ENCODE measurements at regions of chr12 and their contacts with region 1.

Region 1: DNA sequence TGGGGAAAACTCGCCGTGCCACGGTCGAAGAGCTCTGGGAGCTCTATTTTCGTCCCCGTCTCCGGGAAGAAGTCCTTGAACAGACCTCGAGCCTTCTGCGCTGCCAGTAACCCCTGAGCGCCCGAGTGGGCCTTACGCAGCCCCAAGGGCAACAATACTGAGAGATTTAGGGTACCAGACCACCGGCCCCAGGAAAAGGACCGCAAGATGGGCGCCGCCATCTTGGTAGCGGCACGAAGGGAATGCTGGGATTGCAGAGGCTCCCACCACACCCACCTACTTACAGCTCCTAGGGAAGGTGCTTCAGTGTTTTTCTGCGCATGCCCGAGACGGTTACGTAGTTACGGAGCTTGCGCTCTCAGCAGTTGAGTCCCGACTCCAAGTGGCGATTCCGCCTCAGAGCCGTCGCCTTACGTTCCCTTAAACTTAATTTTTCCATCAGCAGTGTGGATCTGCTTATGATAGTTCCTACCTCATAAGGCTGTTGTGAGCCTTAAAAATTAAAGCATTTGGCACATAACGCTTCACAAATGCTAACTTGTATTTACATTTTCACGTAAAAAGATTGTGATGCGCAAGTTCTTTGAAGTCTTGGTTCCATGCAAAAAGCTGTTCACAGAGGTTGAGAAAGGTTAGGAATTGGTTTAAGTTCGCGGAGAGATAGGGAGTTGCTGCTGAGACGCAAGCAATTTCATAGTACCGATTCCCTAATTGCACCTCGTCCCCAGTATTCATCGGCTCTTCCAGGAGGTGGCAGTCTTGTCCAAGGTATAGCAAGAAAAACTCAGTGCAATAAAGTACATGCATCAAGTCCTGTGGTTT is at the start of gene YARS2:
- DNase-seq: peak; percentile 97 to 99
- H3K4me3 ChIP-seq: peak within 1 kb of the TSS; percentile 59
- H3K4me3 Mint-ChIP-seq: peak within 1 kb of the TSS; percentile 87
- H3K27ac Mint-ChIP-seq: peak within 1 kb of the TSS; percentile 94
- H3K4me1 ChIP-seq: peaks cover 16% of the 10 kb centered on the region
- H3K4me1 Mint-ChIP-seq: peaks cover 9% of the 10 kb centered on the region
- H3K27me3 ChIP-seq: no peaks in the 10 kb centered on the region
- H3K27me3 Mint-ChIP-seq: peaks cover 5% of the 10 kb centered on the region
- CTCF ChIP-seq: peak; percentile 88 to 95
- total RNA-seq, gene YARS2: 48.7 and 56.6 TPM in 2 replicates

Region 2: GRCh38 chr12:32344047-32344446 is 411.8 kb before region 1 on chr12:
- CTCF ChIA-PET with region 1: interaction called, 10 read pairs
- POLR2A ChIA-PET with region 1: no interaction called
- intact Hi-C with region 1: no loop called
- DNase-seq: peak; percentile 54
- H3K4me3 ChIP-seq: no peak overlapping the region
- H3K4me3 Mint-ChIP-seq: no peak overlapping the region
- H3K27ac Mint-ChIP-seq: no peak overlapping the region
- H3K4me1 ChIP-seq: no peaks in the 10 kb centered on the region
- H3K4me1 Mint-ChIP-seq: no peaks in the 10 kb centered on the region
- H3K27me3 ChIP-seq: no peaks in the 10 kb centered on the region
- H3K27me3 Mint-ChIP-seq: no peaks in the 10 kb centered on the region
- CTCF ChIP-seq: peak in 1 of 2 experiments; percentile 40

Region 3: DNA sequence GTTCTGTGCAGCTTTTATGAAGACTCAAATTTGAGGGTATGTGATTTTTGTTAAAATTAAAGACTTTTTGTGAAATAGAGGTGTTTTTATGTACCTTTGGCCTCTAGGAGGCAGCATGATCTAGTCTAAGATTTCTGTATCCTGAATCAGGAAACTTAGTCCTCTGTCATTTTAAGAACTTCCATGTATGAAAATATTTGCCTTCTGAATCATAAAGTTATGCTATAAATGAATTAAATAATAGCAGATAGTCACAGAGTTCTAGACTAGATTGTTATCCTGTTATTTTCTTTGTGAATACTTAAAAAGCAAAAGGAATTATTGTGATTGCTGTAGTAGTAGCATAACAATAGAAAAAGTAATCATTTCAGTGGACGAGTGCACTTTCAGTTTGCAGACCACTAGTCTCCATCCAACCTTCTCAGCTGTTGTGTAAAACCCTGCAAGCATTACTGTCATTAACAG is 300.2 kb before region 1 on chr12:
- CTCF ChIA-PET with region 1: interaction called, 5 read pairs
- POLR2A ChIA-PET with region 1: no interaction called
- intact Hi-C with region 1: loop called (anchors 10 kb)
- DNase-seq: peak in 1 of 2 experiments; percentile 69
- H3K4me3 ChIP-seq: no peak overlapping the region
- H3K4me3 Mint-ChIP-seq: no peak overlapping the region
- H3K27ac Mint-ChIP-seq: peak overlapping the region; percentile 74
- H3K4me1 ChIP-seq: peaks cover 48% of the 10 kb centered on the region
- H3K4me1 Mint-ChIP-seq: peaks cover 54% of the 10 kb centered on the region
- H3K27me3 ChIP-seq: no peaks in the 10 kb centered on the region
- H3K27me3 Mint-ChIP-seq: no peaks in the 10 kb centered on the region
- CTCF ChIP-seq: peak; percentile 68 to 82

Region 4: GRCh38 chr12:32770141-32770540 is 14.3 kb after region 1 on chr12:
- CTCF ChIA-PET with region 1: interaction called, 10 read pairs
- POLR2A ChIA-PET with region 1: no interaction called
- intact Hi-C with region 1: no loop called
- DNase-seq: no peak
- H3K4me3 ChIP-seq: no peak overlapping the region
- H3K4me3 Mint-ChIP-seq: no peak overlapping the region
- H3K27ac Mint-ChIP-seq: no peak overlapping the region
- H3K4me1 ChIP-seq: no peaks in the 10 kb centered on the region
- H3K4me1 Mint-ChIP-seq: peaks cover 5% of the 10 kb centered on the region
- H3K27me3 ChIP-seq: no peaks in the 10 kb centered on the region
- H3K27me3 Mint-ChIP-seq: peaks cover 6% of the 10 kb centered on the region
- CTCF ChIP-seq: no peak

Region 5: DNA sequence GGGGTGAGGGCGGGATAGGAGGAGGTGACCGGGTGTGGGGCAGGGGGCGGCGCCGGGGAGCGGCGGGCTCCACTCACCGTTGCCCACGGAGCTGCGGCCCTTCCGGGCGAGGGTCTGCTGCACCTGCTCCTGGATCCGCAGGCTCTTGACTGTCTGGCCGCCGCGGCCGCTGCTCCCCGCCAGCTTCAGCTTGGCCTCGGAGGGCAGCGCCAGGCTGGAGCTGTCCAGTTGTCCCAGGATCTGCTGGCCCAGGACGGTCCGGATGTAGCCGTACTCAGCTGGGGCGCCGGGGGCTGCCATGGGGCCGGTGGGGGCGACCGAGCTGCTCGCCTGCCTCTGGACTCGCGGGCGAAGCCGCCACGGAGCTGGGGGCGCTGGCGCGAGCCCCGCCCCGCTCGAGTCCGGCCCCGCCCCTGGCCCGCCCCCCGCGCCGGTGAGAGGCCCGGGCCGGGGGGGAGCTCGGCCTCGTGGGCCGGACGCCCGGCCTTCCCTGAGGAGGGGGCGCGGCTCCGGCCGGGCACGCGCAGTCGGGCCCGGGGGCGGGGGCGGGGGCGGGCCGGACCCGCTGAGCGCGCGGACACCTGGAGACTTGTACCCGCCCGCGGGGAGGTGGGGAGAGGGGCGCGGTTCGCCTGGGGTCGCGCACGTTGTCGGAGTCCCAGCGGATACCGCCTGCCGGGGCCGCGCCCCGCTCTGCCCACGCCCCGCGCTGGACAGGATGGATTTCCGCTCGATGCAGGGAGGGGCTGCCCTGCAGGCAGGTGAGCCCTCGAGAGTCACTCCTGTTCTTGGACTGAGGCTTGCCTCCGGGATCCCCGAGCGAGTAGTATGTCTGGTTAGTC is 140.8 kb after region 1 on chr12 and contains the start of gene PKP2:
- CTCF ChIA-PET with region 1: interaction called, 15 read pairs
- POLR2A ChIA-PET with region 1: interaction called, 25 read pairs
- intact Hi-C with region 1: loop called (anchors 1 kb)
- DNase-seq: peak; percentile 100
- H3K4me3 ChIP-seq: peak within 1 kb of the TSS; percentile 95
- H3K4me3 Mint-ChIP-seq: peak within 1 kb of the TSS; percentile 91
- H3K27ac Mint-ChIP-seq: peak within 1 kb of the TSS; percentile 87
- H3K4me1 ChIP-seq: peaks cover 52% of the 10 kb centered on the region
- H3K4me1 Mint-ChIP-seq: peaks cover 50% of the 10 kb centered on the region
- H3K27me3 ChIP-seq: no peaks in the 10 kb centered on the region
- H3K27me3 Mint-ChIP-seq: no peaks in the 10 kb centered on the region
- CTCF ChIP-seq: no peak
- total RNA-seq, gene PKP2: 249 and 275 TPM in 2 replicates

Region 6: DNA sequence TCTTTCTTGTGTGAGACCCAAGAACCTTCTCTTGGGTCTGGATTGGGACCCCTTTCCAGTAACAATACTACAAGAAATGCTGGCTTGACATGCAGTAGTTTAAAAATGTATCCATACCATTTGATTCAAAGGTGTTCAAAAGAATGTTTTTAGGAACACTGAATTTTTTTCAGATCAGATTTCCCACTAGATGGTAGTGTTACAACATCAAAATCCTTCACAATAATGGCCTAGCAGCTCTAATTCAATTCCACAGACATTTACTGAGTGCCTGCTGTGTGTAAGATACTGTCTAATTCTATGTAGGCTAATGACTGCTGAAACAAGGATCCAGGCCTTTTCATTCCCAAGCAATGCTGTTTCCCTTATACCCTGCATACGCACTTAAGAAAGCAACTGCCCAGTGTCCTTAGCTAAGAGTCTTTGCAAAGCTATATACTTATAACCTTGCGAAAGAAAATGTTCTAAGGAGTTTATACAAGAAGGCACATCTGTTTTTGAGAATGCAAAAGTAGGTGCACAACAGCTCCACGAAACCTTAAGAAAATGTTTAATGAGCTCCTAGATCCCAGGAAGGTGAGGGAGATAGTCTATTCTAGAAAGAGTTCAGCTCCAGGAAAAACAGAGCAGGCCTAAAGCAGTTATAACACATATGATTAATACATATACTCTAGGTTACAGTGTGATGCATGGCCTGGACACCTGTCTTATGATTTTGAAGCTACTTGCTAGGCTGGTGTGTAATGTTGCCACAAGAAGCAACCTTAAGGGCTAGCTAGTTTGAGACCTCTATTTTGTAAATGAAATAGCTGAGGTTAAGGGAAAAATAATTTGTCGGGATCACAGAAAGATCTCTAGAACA is 191.6 kb after region 1 on chr12:
- CTCF ChIA-PET with region 1: interaction called, 17 read pairs
- POLR2A ChIA-PET with region 1: no interaction called
- intact Hi-C with region 1: loop called (anchors 1 kb)
- DNase-seq: peak in 1 of 2 experiments; percentile 63
- H3K4me3 ChIP-seq: no peak overlapping the region
- H3K4me3 Mint-ChIP-seq: no peak overlapping the region
- H3K27ac Mint-ChIP-seq: peak overlapping the region; percentile 12
- H3K4me1 ChIP-seq: peaks cover 16% of the 10 kb centered on the region
- H3K4me1 Mint-ChIP-seq: peaks cover 12% of the 10 kb centered on the region
- H3K27me3 ChIP-seq: no peaks in the 10 kb centered on the region
- H3K27me3 Mint-ChIP-seq: no peaks in the 10 kb centered on the region
- CTCF ChIP-seq: peak in 1 of 2 experiments; percentile 21

Region 7: DNA sequence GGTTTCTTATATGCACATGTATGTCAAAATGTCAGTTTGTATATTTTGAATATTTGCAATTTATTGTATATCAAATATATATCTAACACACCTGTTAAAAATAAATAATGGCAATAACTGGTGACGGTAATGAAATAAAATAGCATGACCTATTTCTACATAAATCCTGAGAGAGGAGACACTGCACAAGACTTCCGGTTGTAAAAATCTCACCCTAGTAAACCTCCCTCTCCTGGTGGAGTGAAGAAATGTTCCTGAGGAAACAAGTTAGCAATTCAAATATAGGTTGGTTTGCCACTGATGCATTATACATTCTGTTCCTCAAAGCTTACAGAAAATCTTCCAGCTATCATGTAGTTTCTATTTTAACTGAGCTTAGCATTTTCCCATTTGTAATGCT is 849.9 kb after region 1 on chr12:
- CTCF ChIA-PET with region 1: interaction called, 4 read pairs
- POLR2A ChIA-PET with region 1: no interaction called
- intact Hi-C with region 1: loop called (anchors 1 kb)
- DNase-seq: peak in 1 of 2 experiments; percentile 43
- H3K4me3 ChIP-seq: no peak overlapping the region
- H3K4me3 Mint-ChIP-seq: no peak overlapping the region
- H3K27ac Mint-ChIP-seq: no peak overlapping the region
- H3K4me1 ChIP-seq: no peaks in the 10 kb centered on the region
- H3K4me1 Mint-ChIP-seq: no peaks in the 10 kb centered on the region
- H3K27me3 ChIP-seq: no peaks in the 10 kb centered on the region
- H3K27me3 Mint-ChIP-seq: peaks cover 11% of the 10 kb centered on the region
- CTCF ChIP-seq: peak; percentile 56 to 62